Gastrocnemius medialis (tissue), 4 donors: ENCODE measurements at regions of chr3 and their contacts with region 1.

Region 1: GRCh38 chr3:130044370-130044769 is 37.3 kb upstream of the ALG1L2 start:
- DNase-seq: no peak
- ATAC-seq: no peak
- H3K4me3 ChIP-seq: no peak overlapping the region
- H3K27ac ChIP-seq: no peak overlapping the region
- H3K4me1 ChIP-seq: no peaks in the 10 kb centered on the region
- H3K27me3 ChIP-seq: no peaks in the 10 kb centered on the region
- CTCF ChIP-seq: no peak
- POLR2A ChIP-seq: no peak

Region 2: DNA sequence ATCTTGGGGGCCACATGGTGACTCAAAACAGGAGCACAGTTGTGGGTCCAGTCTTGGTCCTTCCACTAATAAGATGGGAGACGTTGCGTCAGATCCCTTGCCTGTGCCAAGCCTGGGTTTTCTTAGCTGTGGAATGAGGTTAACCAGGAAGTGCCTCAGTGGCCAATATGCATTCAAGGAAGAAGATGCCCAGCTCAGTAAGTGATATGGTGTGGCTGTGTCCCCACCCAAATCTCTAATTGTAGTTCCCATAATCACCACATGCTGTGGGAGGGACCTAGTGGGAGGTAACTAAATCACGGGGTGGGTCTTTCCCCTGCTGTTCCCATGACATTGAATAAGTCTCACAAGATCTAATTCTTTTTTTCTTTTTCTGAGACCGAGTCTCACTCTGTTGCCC is 43.7 kb after region 1 on chr3:
- in situ Hi-C with region 1: loop called in 3 of 4 experiments (anchors 5 kb)
- intact Hi-C with region 1: no loop called
- DNase-seq: no peak
- ATAC-seq: no peak
- H3K4me3 ChIP-seq: no peak overlapping the region
- H3K27ac ChIP-seq: no peak overlapping the region
- H3K4me1 ChIP-seq: no peaks in the 10 kb centered on the region
- H3K27me3 ChIP-seq: no peaks in the 10 kb centered on the region
- CTCF ChIP-seq: no peak
- POLR2A ChIP-seq: no peak

Region 3: DNA sequence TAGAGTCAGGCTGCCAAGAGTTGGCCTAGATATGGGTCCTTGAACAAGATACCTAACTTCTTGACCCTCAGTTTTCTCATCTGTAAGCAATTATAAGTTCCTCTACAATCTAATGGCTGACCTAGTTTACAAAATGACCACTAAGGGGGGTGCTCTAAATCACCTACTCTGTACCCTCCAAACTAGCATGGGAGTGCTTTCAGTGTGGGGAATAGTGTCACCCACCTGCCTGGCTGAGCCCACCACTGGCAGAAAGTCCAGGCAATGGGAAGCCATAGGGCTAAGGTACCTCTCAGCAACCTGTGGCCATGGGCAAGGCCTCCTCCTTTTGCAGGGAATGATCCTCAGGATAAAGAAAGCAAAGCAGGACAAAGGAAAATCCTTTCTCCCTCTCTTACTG is 360.0 kb after region 1 on chr3:
- in situ Hi-C with region 1: no loop called
- intact Hi-C with region 1: no loop called
- DNase-seq: no peak
- ATAC-seq: no peak
- H3K4me3 ChIP-seq: no peak overlapping the region
- H3K27ac ChIP-seq: no peak overlapping the region
- H3K4me1 ChIP-seq: no peaks in the 10 kb centered on the region
- H3K27me3 ChIP-seq: no peaks in the 10 kb centered on the region
- CTCF ChIP-seq: no peak
- POLR2A ChIP-seq: no peak